Activated CD8-positive, alpha-beta T cell treated with anti-CD3 and anti-CD28 coated beads for 36 hours (primary cell): ENCODE measurements at regions of chr5 and their contacts with region 1.

Region 1: DNA sequence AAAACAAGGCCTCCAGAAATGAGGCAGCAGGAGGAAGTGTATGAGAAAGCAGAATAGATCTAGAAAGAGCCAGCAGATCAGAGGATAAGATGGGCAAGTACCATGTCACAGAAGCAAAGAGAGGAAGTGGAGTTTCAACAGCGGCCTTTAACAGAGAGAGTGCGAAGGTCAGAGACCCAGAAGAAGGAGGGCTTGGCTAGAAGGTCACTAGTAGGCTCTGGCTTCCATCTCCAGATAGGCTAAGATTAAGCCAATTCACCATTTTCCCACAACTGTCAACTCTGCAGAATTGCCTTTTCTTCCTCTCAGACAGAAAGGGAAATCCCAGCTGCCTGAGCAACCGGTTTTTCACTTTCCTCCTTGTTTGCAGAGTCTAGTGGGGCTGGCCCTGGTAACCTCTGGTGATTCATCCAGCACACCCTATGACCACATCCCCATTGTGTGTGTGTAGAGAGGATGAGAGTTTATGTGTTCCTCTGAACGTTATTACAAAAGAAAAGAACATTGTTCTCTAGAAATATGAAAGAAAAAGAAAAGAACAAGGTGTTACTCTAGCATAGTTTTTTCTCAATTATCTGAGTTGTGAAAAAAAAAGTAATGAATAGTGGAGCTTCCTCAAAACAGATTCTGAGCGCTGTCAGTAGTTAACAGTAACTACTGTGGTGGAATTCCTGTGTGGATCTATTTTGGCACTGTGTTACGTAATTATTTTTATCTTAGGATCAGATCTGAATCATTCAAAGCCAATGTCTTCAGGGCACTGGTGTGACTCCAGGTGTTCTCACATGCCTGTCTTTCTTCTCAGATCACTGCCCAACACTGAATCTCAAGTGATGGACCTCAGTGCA is 220.4 kb downstream of the ARRDC3 start:
- DNase-seq: peak; percentile 86
- ATAC-seq: peak; percentile 98
- H3K4me3 Mint-ChIP-seq: peak overlapping the region; percentile 6
- H3K27ac Mint-ChIP-seq: peak overlapping the region; percentile 55
- H3K4me1 Mint-ChIP-seq: peaks cover 21% of the 10 kb centered on the region
- H3K27me3 Mint-ChIP-seq: no peaks in the 10 kb centered on the region
- CTCF ChIP-seq: no peak

Region 2: DNA sequence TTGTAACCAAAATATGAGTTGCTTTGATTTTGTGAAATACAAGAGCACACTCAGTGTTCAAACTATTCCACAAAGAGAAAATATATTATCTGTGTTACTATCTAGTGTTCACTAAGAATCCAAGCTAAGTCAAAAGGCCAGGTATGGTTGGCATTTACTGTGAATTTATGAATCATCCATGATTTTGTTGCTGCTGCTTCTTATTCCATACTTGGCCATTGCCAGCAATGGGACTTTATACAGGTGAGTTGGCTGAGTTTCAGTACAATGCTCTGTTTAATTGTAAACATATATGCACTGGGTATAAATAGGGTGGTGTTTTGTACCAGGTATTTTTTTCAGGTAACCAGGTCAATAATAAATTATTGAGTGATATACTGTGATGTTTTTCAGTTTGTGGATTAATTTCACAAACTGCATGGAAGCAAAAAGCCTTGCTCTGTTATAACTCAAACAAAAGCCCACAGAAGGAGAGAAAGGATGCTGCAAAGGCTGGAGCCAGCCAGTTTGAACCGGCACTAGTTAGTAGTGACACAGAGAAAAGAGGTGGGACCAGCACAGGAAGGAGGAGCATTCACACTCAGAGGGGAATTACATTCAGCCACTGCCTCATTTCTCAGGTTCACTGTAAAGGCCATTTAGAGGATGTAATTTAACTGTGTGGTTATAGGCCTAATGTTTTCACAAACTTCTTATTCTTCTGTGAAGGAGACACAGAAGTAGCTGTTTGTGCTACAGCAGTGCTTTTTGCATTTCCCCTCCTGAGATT is 222.3 kb before region 1 on chr5:
- CTCF ChIA-PET with region 1: no interaction called
- POLR2A ChIA-PET with region 1: no interaction called
- intact Hi-C with region 1: loop called (anchors 5 kb)
- DNase-seq: peak; percentile 87
- ATAC-seq: peak; percentile 100
- H3K4me3 Mint-ChIP-seq: peak overlapping the region; percentile 15
- H3K27ac Mint-ChIP-seq: peak overlapping the region; percentile 78
- H3K4me1 Mint-ChIP-seq: peaks cover 26% of the 10 kb centered on the region
- H3K27me3 Mint-ChIP-seq: no peaks in the 10 kb centered on the region
- CTCF ChIP-seq: no peak

Region 3: GRCh38 chr5:91126448-91126847 is 36.3 kb before region 1 on chr5:
- CTCF ChIA-PET with region 1: no interaction called
- POLR2A ChIA-PET with region 1: no interaction called
- intact Hi-C with region 1: no loop called
- DNase-seq: no peak
- ATAC-seq: no peak
- H3K4me3 Mint-ChIP-seq: no peak overlapping the region
- H3K27ac Mint-ChIP-seq: no peak overlapping the region
- H3K4me1 Mint-ChIP-seq: no peaks in the 10 kb centered on the region
- H3K27me3 Mint-ChIP-seq: peaks cover 2% of the 10 kb centered on the region
- CTCF ChIP-seq: no peak